PC-9 (cell line): ENCODE measurements at regions of chr6 and their contacts with region 1.

Region 1: GRCh38 chr6:42261443-42261842 is 43.8 kb upstream of the MRPS10 start:
- DNase-seq: no peak
- H3K4me3 ChIP-seq: no peak overlapping the region
- H3K27ac ChIP-seq: no peak overlapping the region
- H3K4me1 ChIP-seq: no peaks in the 10 kb centered on the region
- H3K27me3 ChIP-seq: no peaks in the 10 kb centered on the region
- CTCF ChIP-seq: no peak

Region 2: GRCh38 chr6:42190554-42191183 is 70.8 kb before region 1 on chr6:
- CTCF ChIA-PET with region 1: no interaction called
- POLR2A ChIA-PET with region 1: no interaction called
- intact Hi-C with region 1: no loop called
- DNase-seq: no peak
- H3K4me3 ChIP-seq: no peak overlapping the region
- H3K27ac ChIP-seq: no peak overlapping the region
- H3K4me1 ChIP-seq: peaks cover 13% of the 10 kb centered on the region; the same call in 1 of the 2 replicates
- H3K27me3 ChIP-seq: no peaks in the 10 kb centered on the region
- CTCF ChIP-seq: no peak

Region 3: DNA sequence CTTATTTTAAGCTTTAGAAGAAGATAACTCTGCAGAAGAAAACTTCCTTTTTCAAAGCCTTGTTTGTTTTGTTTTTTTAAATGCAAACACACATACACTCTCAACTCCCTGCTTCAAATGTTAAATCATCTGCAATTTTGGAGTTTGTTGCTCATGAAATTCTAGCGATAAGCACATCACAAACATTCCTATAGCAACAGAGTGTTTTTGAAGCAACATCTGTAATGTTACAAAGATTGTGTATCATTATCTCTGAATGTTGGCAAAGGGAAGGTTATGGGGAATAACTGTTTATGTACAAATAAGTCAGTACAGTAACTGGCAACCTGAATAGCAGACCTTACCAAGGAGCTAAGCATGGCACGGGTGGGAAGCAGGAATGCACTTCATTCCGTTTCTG is 41.0 kb after region 1 on chr6:
- CTCF ChIA-PET with region 1: no interaction called
- POLR2A ChIA-PET with region 1: no interaction called
- intact Hi-C with region 1: no loop called
- DNase-seq: no peak
- H3K4me3 ChIP-seq: no peak overlapping the region
- H3K27ac ChIP-seq: no peak overlapping the region
- H3K4me1 ChIP-seq: peaks cover 42% of the 10 kb centered on the region
- H3K27me3 ChIP-seq: no peaks in the 10 kb centered on the region
- CTCF ChIP-seq: no peak

Region 4: GRCh38 chr6:42368181-42368580 is 106.7 kb after region 1 on chr6:
- CTCF ChIA-PET with region 1: no interaction called
- POLR2A ChIA-PET with region 1: interaction called, 14 read pairs
- intact Hi-C with region 1: no loop called
- DNase-seq: no peak
- H3K4me3 ChIP-seq: no peak overlapping the region
- H3K27ac ChIP-seq: no peak overlapping the region
- H3K4me1 ChIP-seq: peaks cover 19% of the 10 kb centered on the region
- H3K27me3 ChIP-seq: no peaks in the 10 kb centered on the region
- CTCF ChIP-seq: no peak